Ascending aorta (tissue), 2 donors: ENCODE measurements at regions of chr10 and their contacts with region 1.

Region 1: DNA sequence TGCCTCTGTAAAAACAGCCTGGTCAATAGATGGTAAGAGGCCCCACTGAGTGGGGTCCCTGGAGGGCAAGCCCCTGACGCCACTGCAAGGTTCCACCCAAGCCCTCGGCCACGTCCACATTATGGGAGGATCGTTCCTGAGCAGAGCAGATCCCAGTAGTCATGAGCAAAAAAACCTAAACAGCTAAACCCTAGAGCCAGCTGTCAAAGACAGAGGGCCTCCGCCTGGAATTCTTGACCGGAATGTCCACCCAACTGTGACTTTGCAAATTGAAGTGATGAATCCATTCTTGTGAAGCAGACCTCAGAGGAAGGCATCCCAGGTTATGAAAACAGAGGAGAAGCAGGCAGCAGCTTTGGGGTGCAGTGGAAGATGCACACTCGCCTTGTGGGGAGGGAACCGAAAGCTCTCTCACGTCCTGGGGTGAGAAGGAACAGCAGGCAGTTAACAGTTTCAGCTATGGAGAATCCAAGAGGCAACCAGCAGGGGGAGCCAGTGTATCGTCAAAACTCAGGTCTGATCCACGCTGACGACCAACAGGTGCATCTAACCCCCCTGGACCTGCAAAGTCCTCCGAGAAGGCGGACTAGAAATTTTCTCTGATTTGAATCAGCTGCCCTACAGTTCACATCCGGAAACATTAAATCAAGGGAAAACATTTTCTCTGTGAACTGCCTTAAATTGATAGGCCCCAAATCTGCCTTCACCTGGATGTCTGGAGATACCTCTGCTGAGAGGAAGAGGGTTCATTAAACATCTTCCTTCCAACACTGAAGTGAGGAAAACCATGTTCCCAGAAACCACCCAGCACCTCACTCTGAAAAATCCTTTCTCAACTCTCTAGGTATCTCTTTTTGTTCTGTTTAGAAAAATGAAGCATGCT is 139.1 kb upstream of the PFKP start:
- DNase-seq: no peak
- H3K4me3 ChIP-seq: no peak overlapping the region
- H3K27ac ChIP-seq: no peak overlapping the region
- H3K4me1 ChIP-seq: peaks cover 0 to 3% of the 10 kb centered on the region in 2 donors
- H3K27me3 ChIP-seq: no peaks in the 10 kb centered on the region
- CTCF ChIP-seq: peak; percentile 35 to 60 (median 37)

Region 2: GRCh38 chr10:3043512-3044368 is 115.5 kb after region 1 on chr10:
- intact Hi-C with region 1: loop called (anchors 5 kb)
- DNase-seq: peak in 1 of 2 donors; percentile 84
- H3K4me3 ChIP-seq: no peak overlapping the region
- H3K27ac ChIP-seq: peak overlapping the region; percentile 37 to 69
- H3K4me1 ChIP-seq: peaks cover 8 to 27% of the 10 kb centered on the region in 2 donors
- H3K27me3 ChIP-seq: no peaks in the 10 kb centered on the region
- CTCF ChIP-seq: peak; percentile 74 to 88 (median 82)

Region 3: DNA sequence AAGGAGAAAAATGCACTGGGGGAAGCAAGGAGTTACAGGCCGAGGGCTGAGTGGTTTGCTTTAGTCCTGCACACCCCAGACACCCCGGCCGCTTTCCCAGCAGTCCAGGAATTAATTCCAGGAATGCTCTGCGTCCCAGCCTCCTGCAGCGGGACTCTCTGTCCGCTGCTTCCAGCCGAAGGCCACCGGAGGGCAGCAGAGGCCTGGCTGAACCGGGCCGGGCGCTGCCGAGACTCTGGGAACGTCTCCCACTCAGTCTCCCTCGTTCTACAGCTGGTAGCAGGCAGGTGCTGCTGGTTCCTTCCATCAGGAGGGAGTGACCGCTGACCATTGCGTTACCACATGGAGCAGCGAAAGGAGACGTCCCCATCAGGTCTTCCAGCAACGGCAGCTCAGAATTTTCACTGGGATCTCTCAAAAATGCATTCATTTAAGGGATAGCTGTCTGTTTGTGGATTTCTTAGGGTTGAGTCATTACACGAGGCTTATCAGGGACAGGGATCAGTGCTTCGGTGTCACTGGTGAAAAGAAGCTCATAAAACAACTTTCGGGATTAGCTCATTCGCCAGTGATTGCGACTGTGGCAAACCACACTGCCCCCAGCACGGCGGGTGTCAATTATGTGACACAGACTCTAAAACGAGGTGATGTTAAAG is 269.3 kb after region 1 on chr10:
- intact Hi-C with region 1: no loop called
- DNase-seq: peak; percentile 26 to 90
- H3K4me3 ChIP-seq: peak overlapping the region in 1 of 2 donors; percentile 54
- H3K27ac ChIP-seq: no peak overlapping the region
- H3K4me1 ChIP-seq: peaks cover 3 to 4% of the 10 kb centered on the region in 2 donors
- H3K27me3 ChIP-seq: no peaks in the 10 kb centered on the region
- CTCF ChIP-seq: peak; percentile 95 to 96 (median 96)